H1 (cell line): ENCODE measurements at regions of chr4 and their contacts with region 1.

Region 1: DNA sequence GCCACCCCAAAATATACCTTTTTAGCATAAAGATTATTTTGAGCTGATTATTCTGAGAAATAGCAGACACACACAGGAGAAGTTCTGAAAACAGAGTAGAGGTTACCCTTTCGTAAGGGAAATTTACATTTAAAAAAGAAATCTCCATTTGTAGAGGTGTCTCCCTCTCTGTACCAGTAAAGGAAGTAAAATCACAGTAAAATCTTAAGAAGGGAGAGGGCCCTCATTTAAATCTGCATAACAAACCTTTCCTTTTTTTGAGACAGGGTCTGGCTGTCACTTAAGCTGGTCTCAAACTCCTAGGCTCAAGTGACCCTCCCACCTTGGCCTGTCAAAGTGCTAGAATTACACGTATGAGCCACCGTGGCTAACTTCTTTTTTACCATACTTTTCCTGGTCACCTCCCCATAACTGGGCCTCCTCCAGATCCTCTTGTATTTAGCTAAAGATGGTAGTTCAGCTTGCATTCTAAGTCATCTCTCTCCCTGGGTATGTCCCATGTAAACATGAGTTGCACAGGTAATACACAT is 92.2 kb upstream of the INTU start:
- DNase-seq: no peak
- H3K4me3 ChIP-seq: peak overlapping the region in 1 of 4 experiments; percentile 28; a peak in 2 of 8 replicates
- H3K27ac ChIP-seq: no peak overlapping the region
- H3K4me1 ChIP-seq: peaks cover 0 to 11% (median 6%) of the 10 kb centered on the region in 4 experiments; a peak in 4 of 7 replicates
- H3K27me3 ChIP-seq: no peaks in the 10 kb centered on the region
- CTCF ChIP-seq: no peak
- EP300 ChIP-seq: no peak
- POLR2A ChIP-seq: no peak
- RAD21 ChIP-seq: no peak

Region 2: GRCh38 chr4:127410201-127410600 is 130.4 kb before region 1 on chr4:
- CTCF ChIA-PET with region 1: no interaction called
- POLR2A ChIA-PET with region 1: no interaction called
- DNase-seq: no peak
- H3K4me3 ChIP-seq: no peak overlapping the region
- H3K27ac ChIP-seq: no peak overlapping the region
- H3K4me1 ChIP-seq: no peaks in the 10 kb centered on the region
- H3K27me3 ChIP-seq: no peaks in the 10 kb centered on the region
- CTCF ChIP-seq: no peak
- EP300 ChIP-seq: no peak
- POLR2A ChIP-seq: no peak
- RAD21 ChIP-seq: no peak

Region 3: GRCh38 chr4:127425851-127426250 is 114.7 kb before region 1 on chr4:
- CTCF ChIA-PET with region 1: no interaction called
- POLR2A ChIA-PET with region 1: no interaction called
- DNase-seq: no peak
- H3K4me3 ChIP-seq: no peak overlapping the region
- H3K27ac ChIP-seq: no peak overlapping the region
- H3K4me1 ChIP-seq: no peaks in the 10 kb centered on the region; a peak in 1 of 7 replicates
- H3K27me3 ChIP-seq: no peaks in the 10 kb centered on the region
- CTCF ChIP-seq: no peak
- EP300 ChIP-seq: no peak
- POLR2A ChIP-seq: no peak
- RAD21 ChIP-seq: no peak

Region 4: DNA sequence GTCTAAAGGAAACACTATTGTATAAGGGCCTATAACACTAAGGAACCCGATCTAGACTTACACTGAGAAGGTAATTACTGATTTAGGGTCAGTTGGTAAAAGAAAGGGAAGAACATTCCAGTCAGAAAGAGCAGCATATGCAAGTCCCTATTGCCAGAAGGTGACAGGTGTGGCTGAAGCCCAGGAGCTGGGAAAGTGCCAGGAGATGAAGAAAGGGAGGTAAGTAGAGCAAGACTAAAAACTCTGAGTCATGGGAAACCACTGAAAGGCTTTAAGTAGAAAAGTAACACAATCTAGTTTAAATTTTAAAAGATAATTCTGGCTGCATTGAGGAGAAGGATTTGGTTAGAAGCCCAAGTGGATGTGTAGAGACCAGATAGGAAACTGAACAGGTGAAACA is 14.5 kb after region 1 on chr4:
- CTCF ChIA-PET with region 1: no interaction called
- POLR2A ChIA-PET with region 1: no interaction called
- DNase-seq: no peak
- H3K4me3 ChIP-seq: no peak overlapping the region
- H3K27ac ChIP-seq: no peak overlapping the region
- H3K4me1 ChIP-seq: no peaks in the 10 kb centered on the region
- H3K27me3 ChIP-seq: no peaks in the 10 kb centered on the region
- CTCF ChIP-seq: no peak
- EP300 ChIP-seq: no peak
- POLR2A ChIP-seq: no peak
- RAD21 ChIP-seq: no peak

Region 5: GRCh38 chr4:127586922-127587571 is 46.5 kb after region 1 on chr4:
- CTCF ChIA-PET with region 1: interaction called, 12 read pairs
- POLR2A ChIA-PET with region 1: no interaction called
- DNase-seq: no peak
- H3K4me3 ChIP-seq: no peak overlapping the region
- H3K27ac ChIP-seq: no peak overlapping the region
- H3K4me1 ChIP-seq: no peaks in the 10 kb centered on the region
- H3K27me3 ChIP-seq: no peaks in the 10 kb centered on the region
- CTCF ChIP-seq: peak in 2 of 3 experiments; percentile 79 to 87; a peak in 3 of 4 replicates
- EP300 ChIP-seq: no peak
- POLR2A ChIP-seq: no peak
- RAD21 ChIP-seq: peak; percentile 88 to 93

Region 6: DNA sequence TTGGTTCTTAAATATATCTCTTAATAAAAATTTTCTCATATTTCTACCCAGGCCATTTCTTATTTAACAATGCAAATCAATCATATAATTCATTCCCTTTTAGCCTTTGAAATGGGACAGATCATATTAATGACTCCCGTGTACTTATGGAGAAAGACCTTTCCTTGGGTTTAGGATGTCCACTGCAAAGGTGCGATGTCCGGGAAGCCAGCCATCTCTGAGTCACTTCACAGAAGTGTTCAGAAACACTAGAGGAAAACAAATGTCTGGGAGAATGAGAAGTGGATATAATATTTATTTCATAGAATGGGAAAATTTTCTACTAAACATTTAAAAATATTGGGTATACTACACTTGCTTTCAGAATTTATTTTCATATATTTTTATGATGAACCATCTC is 107.5 kb after region 1 on chr4:
- CTCF ChIA-PET with region 1: no interaction called
- POLR2A ChIA-PET with region 1: no interaction called
- DNase-seq: no peak
- H3K4me3 ChIP-seq: no peak overlapping the region
- H3K27ac ChIP-seq: no peak overlapping the region
- H3K4me1 ChIP-seq: no peaks in the 10 kb centered on the region
- H3K27me3 ChIP-seq: no peaks in the 10 kb centered on the region
- CTCF ChIP-seq: no peak
- EP300 ChIP-seq: no peak
- POLR2A ChIP-seq: no peak
- RAD21 ChIP-seq: no peak